ENCODE measurements at regions of chr6 and their contacts with region 1.

Region 1: DNA sequence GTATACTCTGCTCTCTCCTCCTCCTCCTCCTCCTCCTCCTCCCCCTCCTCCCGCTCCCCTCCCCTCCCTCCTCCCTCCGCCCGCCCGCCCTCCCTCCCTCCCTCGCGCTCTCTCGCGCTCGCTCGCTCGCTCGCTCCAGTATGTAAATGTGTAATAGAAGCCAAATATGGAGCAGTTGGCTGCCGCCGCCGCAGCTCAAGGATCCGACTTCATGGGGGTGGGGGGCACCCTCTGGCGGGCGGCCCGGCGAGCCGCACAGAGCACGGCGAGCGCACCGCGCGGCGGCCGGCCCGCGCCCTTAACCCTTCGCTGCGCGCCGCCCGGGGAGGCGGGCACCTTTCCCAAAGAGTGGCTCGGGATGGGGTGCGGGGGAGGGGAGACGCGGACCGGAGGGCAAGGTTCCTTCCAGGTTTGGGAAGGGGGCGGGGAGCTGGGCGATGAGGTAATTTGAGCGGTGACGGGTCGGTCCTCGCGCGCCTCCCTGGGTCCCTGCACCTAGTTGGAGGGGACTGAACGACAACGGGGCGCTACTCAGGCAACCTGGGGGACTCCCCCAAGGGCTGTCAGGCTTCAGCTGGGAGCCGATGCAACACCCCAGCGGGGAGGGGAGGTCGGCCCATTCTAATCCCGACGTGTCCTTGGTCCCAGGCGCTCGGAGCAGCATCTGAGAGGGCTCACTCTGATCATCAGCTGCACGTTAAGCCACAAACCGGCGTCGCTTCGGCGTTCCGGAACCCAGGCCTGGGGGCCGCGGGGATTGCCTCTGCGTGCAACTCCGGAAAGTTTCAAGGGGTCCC is 409 bp upstream of the ATXN1 start:
- DNase-seq: peak; percentile 89
- H3K4me3 ChIP-seq: peak overlapping the region; percentile 90 to 99
- H3K27ac ChIP-seq: peak overlapping the region; percentile 97 to 98
- H3K4me1 ChIP-seq: peaks cover 13% of the 10 kb centered on the region
- H3K27me3 ChIP-seq: no peaks in the 10 kb centered on the region
- CTCF ChIP-seq: peak in 2 of 4 experiments; percentile 21 to 33
- POLR2A ChIP-seq: peak; percentile 43

Region 2: GRCh38 chr6:16332175-16332542 is 429.5 kb before region 1 on chr6:
- intact Hi-C with region 1: loop called (anchors 2 kb)
- DNase-seq: peak; percentile 83
- H3K4me3 ChIP-seq: no peak overlapping the region
- H3K27ac ChIP-seq: peak overlapping the region in 1 of 2 donors; percentile 41
- H3K4me1 ChIP-seq: no peaks in the 10 kb centered on the region
- H3K27me3 ChIP-seq: no peaks in the 10 kb centered on the region
- CTCF ChIP-seq: peak; percentile 84 to 96 (median 92)
- POLR2A ChIP-seq: no peak

Region 3: DNA sequence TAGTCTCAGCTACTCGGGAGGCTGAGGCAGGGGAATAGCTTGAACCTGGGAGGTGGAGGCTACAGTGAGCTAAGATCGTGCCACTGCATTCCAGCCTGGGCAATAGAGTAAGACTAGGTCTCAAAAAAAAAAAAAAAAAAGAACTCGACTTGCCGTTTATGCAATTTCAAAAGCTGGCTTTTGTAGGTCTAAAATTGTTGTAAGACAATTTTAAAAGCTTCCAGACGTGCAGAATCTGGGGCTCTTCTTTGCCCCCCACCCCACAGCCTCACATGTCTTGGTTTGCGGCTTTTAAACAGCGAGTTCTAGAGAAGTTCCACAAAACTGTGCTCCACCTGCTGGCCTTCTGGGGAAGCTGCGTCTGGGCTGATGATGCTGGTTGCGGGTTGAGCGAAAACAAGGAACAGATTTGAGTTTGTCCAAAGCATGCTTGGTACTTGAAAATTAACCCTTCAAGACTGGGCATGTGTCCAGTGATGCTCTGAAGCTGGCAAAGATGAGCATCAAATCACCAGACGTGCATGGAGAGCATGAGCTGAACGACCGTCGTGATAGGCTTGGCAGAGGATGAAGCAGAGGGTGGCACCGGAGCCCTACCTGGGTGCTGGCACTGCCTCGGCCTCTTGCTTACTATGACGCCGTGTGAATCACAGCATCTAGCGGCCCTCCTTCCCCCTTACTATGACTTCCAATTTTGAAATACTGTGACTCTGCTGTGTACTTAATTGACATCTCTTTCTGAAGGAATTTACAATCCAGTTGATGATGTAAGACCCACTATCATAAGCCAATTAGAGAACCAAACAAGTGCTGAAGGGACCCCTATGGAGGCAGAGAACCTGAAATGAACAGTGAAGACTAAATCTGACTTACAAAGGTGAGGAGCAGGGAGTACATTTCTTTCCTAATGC is 351.9 kb before region 1 on chr6:
- intact Hi-C with region 1: loop called (anchors 10 kb)
- DNase-seq: peak; percentile 48
- H3K4me3 ChIP-seq: no peak overlapping the region
- H3K27ac ChIP-seq: no peak overlapping the region
- H3K4me1 ChIP-seq: peaks cover 1% of the 10 kb centered on the region
- H3K27me3 ChIP-seq: no peaks in the 10 kb centered on the region
- CTCF ChIP-seq: peak; percentile 10 to 71 (median 54)
- POLR2A ChIP-seq: no peak

Region 4: DNA sequence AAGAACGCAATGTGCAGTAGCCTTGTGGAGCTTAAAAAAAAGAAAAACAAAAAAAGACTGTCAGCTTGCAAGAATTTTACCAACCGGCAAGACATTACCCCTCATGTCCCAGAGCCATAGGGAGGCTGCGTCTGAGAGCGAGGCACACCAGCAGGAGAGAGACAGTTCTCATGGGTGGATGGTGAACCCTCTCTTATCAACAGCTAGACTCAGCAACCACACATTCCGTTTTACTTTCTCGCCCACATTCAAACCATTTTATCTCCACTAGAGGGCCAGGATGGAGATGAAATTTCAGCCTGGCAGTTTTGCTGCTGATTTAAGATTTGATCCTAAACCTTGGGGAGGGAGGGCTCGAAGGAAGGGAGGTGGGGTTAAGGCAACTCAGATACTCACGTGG is 247.4 kb before region 1 on chr6:
- intact Hi-C with region 1: loop called (anchors 2 kb)
- DNase-seq: no peak
- H3K4me3 ChIP-seq: no peak overlapping the region
- H3K27ac ChIP-seq: no peak overlapping the region
- H3K4me1 ChIP-seq: peaks cover 8% of the 10 kb centered on the region
- H3K27me3 ChIP-seq: no peaks in the 10 kb centered on the region
- CTCF ChIP-seq: peak in 3 of 4 experiments; percentile 44 to 52 (median 51)
- POLR2A ChIP-seq: no peak

Region 5: DNA sequence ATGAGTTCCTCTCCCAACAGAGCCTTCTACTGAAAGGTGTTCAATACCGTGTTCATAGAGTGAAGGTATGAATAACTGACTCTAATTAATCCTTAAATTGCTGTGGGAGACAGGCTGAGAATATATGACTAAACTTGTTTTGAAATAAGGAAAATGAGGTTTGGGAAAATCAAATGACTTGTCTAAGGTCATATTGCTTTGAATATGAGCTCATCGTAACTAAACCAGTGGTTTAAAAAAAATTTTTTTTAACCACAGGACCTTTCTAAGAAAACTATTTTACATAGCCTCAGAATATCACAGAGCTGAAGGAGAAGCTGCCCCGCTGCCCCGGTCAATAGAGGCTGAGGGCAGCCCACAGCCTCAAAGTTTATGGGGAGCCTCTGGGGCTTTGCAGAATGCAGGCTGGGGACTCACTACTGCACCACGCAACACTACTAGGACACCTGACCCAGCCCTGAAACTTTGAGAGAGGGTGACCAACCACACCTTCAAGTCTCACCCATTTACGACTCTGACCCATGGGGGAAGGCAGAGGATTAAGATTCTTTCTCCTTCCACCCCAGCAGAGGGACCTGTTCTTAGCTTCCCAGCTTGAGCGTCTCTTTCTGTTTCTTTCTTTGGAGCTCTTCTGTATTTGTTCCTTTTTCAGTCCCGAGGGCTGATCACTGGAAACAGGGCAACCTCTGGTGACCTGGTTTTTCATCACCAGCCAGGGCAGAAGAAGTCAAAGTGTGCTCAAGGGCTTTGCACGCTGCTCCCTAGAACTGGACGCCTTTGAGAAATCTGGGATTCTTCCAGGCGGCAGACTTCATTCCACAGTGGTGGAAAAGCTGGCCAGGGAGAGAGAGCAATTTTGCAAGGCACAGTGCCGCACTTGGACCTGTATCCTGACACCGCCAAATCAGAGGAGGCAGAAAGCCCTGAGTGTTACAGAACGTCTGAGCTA is 220.6 kb before region 1 on chr6:
- intact Hi-C with region 1: loop called (anchors 10 kb)
- DNase-seq: no peak
- H3K4me3 ChIP-seq: no peak overlapping the region
- H3K27ac ChIP-seq: peak overlapping the region in 1 of 2 donors; percentile 11
- H3K4me1 ChIP-seq: no peaks in the 10 kb centered on the region
- H3K27me3 ChIP-seq: no peaks in the 10 kb centered on the region
- CTCF ChIP-seq: no peak
- POLR2A ChIP-seq: no peak

Region 6: DNA sequence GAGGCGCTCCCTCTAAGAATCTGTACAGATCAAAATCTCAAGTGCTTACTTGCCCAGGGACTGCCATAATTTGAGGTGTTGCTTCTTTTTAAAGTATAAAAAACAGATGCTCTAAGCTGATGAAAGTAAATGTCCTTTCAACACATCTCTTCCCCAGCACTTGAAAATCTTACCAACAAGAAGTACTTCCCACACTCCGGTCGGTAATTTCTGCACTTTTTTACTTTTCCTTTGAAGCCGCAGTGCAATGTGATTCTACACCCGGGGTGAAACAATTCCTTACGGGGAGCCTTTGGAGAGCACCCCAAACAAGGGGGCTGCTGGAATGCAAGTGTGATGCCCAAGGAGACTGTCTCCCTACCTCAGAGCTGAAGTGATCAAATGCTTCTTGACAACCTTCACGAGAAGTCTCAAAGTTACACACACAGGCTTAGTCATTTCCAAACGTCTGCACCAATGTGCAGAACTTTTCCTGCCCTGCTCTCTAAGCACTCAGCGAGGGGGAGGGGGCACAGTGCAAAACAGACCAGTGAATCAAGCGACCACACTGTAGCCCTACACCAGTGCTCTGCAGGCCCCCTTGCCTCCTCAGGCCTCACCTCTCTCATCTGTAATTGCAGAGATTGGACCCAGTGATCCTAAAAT is 57.1 kb before region 1 on chr6:
- intact Hi-C with region 1: loop called (anchors 10 kb)
- DNase-seq: no peak
- H3K4me3 ChIP-seq: peak overlapping the region; percentile 1 to 6
- H3K27ac ChIP-seq: no peak overlapping the region
- H3K4me1 ChIP-seq: no peaks in the 10 kb centered on the region
- H3K27me3 ChIP-seq: no peaks in the 10 kb centered on the region
- CTCF ChIP-seq: no peak
- POLR2A ChIP-seq: no peak